Left ventricle myocardium superior (tissue), 1 donor: ENCODE measurements at regions of chr11 and their contacts with region 1.

Region 1: DNA sequence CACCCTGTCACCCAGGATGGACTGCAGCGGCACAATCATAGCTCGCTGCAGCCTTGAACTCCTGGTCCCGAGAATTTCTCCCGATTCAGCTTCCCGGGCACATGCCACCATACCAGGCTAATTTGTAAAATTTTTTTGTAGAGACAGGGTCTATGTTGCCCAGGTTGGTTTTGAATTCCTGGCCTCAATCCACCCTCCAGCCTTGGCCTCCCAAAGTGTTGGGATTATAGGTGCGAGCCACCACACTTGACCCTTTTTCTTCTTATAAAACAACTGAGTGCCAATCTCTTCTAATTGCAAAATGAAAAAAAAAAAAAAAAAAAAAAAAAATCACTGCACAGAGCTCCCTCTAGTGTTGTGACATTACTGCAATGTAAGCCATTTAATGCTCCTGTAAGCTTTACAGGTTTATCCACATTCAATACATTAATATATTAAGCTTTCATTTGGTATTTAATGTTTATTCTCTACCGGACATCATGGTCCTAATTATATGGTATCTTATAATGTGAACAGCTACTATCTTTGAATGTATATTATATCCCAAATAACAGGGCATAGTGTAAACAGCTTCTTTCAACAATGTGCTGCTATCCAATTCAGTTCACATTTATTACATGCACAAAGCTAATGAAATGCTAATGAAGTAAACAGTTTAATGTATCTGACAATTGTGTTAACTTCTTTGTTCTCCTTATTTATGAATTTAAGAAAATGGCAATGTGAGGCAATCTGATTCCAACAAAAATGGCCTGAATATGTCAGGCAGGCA is 44.6 kb downstream of the COPB1 start:
- DNase-seq: no peak
- ATAC-seq: peak; percentile 53

Region 2: DNA sequence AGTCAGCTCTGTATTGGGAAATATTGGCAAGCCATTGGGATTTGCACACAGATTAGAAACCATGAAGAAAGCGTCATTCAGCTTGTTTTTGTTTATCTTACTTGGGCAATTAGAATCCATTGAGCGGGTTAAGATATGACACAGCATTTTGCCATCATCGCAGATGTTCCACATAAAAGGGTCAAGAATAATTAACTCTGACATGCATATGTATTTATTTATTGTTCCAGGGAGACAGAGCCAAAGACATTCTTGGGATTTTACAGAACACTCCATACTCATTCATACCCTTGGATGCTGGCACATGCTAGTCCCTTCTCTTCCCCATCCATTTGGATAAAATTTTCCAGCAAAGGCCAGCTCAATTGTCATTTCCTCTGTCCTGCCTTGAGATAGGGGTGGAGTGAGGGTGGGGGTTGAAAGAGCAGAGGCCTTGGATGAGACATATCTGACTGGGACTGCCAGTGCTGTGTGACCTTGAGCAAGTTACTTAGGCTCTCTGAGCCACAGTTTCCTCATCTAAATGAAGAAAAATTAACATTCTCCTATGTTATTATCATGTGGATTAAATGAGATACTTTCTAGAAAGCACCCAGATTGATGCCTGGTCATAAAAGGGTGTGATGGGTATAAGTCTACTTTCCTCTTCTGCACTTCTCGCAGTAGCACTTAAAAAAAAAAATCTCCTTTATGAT is 275.8 kb before region 1 on chr11:
- intact Hi-C with region 1: no loop called
- DNase-seq: no peak
- ATAC-seq: peak; percentile 83

Region 3: GRCh38 chr11:14300661-14301304 is 154.3 kb before region 1 on chr11:
- intact Hi-C with region 1: loop called (anchors 5 kb)
- DNase-seq: no peak
- ATAC-seq: peak; percentile 88